ENCODE measurements at regions of chr17 and their contacts with region 1.

Region 1: DNA sequence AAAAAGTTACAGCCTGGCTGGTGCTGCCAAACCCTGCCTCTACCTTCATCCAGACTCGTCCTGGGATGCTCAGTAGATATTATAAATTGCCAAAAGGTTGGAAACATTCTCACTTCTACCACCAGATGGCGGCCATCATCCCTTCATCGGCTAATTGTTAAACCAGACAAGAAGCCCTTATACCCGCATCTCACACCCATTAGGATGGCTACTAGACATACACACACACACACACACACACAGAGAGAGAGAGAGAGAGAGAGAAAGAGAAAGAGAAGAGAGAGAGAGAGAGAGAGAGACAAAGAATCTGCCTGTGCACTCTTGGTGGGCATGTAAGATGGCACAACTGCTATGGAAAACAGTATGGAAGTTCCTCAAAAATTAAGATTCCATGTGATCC is 15.0 kb upstream of the SCIMP start:
- DNase-seq: peak; percentile 80
- CTCF ChIP-seq: peak; percentile 59

Region 2: DNA sequence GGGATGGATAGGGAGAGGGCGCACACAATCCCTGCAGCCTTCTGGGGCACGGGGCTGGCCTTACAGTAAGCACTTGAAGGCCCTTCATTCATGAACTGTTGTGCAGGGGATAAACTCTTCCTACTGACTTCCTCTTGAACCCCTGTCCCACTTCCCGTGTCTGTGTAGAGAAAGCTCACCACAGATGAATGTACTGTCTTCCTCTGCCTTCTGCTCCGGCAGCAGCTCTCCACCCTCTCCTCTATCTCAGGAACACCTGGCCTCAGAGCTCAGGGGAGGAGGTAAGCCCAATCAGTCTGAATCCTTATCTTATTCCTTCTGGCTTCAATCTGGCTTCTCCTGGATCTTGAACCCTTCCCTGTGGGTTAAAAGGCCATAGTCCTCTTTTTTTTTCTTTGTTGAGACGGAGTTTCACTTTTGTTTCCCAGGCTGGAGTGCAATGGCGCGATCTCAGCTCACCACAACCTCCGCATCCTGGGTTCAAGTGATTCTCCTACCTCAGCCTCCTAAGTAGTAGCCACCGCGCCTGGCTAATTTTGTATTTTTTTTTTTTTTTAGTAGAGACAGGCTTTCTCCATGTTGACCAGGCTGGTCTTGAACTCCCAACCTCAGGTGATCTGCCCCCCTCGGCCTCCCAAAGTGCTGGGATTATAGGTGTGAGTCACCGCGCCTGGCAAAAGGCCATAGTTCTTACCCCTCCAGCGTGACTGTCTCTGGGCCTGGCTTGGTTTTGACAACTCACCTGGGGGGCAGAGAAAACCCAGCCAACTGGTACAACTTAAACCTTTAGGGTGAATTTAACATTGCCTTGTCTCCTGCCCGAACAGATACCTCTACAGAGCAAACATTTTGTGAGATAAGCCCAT is 207.2 kb before region 1 on chr17:
- in situ Hi-C with region 1: no loop called
- DNase-seq: no peak
- CTCF ChIP-seq: no peak

Region 3: DNA sequence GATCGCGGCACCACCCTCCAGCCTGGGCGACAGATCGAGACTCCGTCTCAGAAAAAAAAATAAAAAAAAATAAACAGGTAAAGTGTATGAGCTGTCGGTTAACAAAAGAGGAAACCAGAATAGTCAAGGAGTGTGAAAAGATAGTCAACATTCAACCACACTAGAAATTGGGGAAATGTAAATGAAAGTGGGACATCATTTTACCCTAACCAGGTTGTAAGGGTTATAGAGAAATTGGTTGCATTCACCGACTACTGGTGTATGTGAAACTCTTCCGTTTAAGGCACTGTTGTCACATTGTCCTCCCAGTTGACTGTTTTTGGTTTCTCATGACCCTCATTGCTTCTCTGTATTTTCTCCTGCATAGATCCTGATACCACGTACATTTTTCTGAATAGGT is 95.3 kb after region 1 on chr17:
- in situ Hi-C with region 1: no loop called
- DNase-seq: no peak
- CTCF ChIP-seq: no peak

Region 4: GRCh38 chr17:5438716-5439445 is 189.3 kb after region 1 on chr17 and contains the start of gene C1QBP:
- in situ Hi-C with region 1: loop called (anchors 25 kb)
- DNase-seq: peak; percentile 96
- CTCF ChIP-seq: peak; percentile 90

Measured in GM13976 (cell line).